CD4-positive, alpha-beta T cell (primary cell): ENCODE measurements at regions of chr2 and their contacts with region 1.

Region 1: GRCh38 chr2:224927646-224928173 is 114.6 kb downstream of the DOCK10 start:
- DNase-seq: peak; percentile 29 to 89 (median 55)
- ATAC-seq: peak; percentile 81
- H3K4me3 ChIP-seq: no peak overlapping the region
- H3K4me3 Mint-ChIP-seq: peak overlapping the region; percentile 70
- H3K27ac ChIP-seq: peak overlapping the region; percentile 71 to 74
- H3K27ac Mint-ChIP-seq: peak overlapping the region; percentile 97
- H3K4me1 ChIP-seq: peaks cover 69% of the 10 kb centered on the region
- H3K4me1 Mint-ChIP-seq: peaks cover 99% of the 10 kb centered on the region
- H3K27me3 ChIP-seq: no peaks in the 10 kb centered on the region
- H3K27me3 Mint-ChIP-seq: no peaks in the 10 kb centered on the region
- CTCF ChIP-seq: no peak

Region 2: DNA sequence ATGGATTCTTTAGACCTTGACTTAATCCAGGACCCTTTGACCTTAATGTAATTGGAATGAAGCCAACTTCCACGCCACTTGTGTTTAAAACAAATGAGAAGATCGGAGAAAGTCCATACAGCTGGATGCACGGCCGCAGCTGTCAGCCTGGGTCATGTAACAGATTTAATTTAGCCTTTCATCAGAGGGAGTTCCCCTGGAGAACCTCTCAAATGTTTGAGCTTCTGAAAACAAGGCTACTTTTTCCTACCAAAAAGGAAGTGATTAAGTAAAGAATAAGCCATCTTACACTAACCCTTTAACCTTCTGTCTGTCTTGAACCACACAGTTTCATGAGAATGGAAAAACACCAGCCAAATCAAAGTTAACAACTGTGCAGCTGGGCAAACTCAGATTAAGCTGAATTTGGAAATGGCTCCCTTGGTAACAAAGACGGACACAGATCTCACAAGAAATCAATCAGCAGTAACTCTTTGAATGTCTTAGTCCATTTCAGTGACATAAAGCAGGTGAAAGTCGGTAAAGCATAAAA is 11.0 kb after region 1 on chr2:
- CTCF ChIA-PET with region 1: interaction called, 7 read pairs
- POLR2A ChIA-PET with region 1: interaction called, 86 read pairs
- intact Hi-C with region 1: loop called in 1 of 2 experiments (anchors 2 kb)
- DNase-seq: peak in 3 of 14 experiments; percentile 25 to 37 (median 30)
- ATAC-seq: peak; percentile 63
- H3K4me3 ChIP-seq: no peak overlapping the region
- H3K4me3 Mint-ChIP-seq: peak overlapping the region; percentile 35
- H3K27ac ChIP-seq: peak overlapping the region; percentile 5 to 14
- H3K27ac Mint-ChIP-seq: peak overlapping the region; percentile 89
- H3K4me1 ChIP-seq: peaks cover 47% of the 10 kb centered on the region
- H3K4me1 Mint-ChIP-seq: peaks cover 90% of the 10 kb centered on the region
- H3K27me3 ChIP-seq: no peaks in the 10 kb centered on the region
- H3K27me3 Mint-ChIP-seq: no peaks in the 10 kb centered on the region
- CTCF ChIP-seq: no peak

Region 3: GRCh38 chr2:224952936-224953657 is 25.4 kb after region 1 on chr2:
- CTCF ChIA-PET with region 1: interaction called, 5 read pairs
- POLR2A ChIA-PET with region 1: interaction called, 86 read pairs
- intact Hi-C with region 1: no loop called
- DNase-seq: peak in 13 of 14 experiments; percentile 17 to 81 (median 34)
- ATAC-seq: peak; percentile 95
- H3K4me3 ChIP-seq: no peak overlapping the region
- H3K4me3 Mint-ChIP-seq: peak overlapping the region; percentile 50
- H3K27ac ChIP-seq: peak overlapping the region; percentile 51 to 57
- H3K27ac Mint-ChIP-seq: peak overlapping the region; percentile 84
- H3K4me1 ChIP-seq: peaks cover 47% of the 10 kb centered on the region
- H3K4me1 Mint-ChIP-seq: peaks cover 88% of the 10 kb centered on the region
- H3K27me3 ChIP-seq: no peaks in the 10 kb centered on the region
- H3K27me3 Mint-ChIP-seq: no peaks in the 10 kb centered on the region
- CTCF ChIP-seq: no peak

Region 4: DNA sequence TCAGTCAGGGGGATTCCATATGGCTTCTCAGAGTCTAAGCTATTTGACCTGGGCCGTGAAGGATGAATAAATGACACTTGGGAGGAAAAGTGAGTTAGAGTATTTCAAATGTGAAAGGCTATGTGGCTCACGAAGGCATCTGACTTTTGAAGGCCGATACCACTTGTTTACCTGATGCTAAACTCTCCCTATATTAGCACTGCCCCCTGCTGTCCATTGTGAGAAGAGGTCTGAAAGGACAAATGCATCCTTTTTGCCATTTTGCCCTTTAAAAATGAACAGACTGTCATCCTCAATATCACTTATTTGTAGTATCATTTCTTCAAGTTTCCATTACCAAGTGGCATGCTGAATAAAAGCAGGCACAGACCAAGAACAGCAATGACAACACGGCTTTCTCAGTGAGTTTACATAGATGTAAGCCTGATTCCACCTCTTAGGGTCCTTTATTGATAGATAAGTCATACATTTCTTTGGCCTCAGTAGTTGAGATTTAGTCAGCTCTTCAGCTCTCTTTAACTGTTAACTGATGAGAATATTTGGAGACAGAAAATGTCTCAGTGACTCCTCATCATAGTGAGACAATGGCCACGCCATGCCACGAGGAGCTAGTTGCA is 74.4 kb after region 1 on chr2:
- CTCF ChIA-PET with region 1: interaction called, 5 read pairs
- POLR2A ChIA-PET with region 1: interaction called, 9 read pairs
- intact Hi-C with region 1: loop called (anchors 1 to 2 kb)
- DNase-seq: peak; percentile 24 to 88 (median 52)
- ATAC-seq: peak; percentile 88
- H3K4me3 ChIP-seq: no peak overlapping the region
- H3K4me3 Mint-ChIP-seq: no peak overlapping the region
- H3K27ac ChIP-seq: no peak overlapping the region
- H3K27ac Mint-ChIP-seq: peak overlapping the region; percentile 83
- H3K4me1 ChIP-seq: peaks cover 44% of the 10 kb centered on the region
- H3K4me1 Mint-ChIP-seq: peaks cover 87% of the 10 kb centered on the region
- H3K27me3 ChIP-seq: no peaks in the 10 kb centered on the region
- H3K27me3 Mint-ChIP-seq: no peaks in the 10 kb centered on the region
- CTCF ChIP-seq: peak; percentile 74